Activated CD4-positive, alpha-beta T cell treated with anti-CD3 and anti-CD28 coated beads for 36 hours (primary cell): ENCODE measurements at regions of chr4 and their contacts with region 1.

Region 1: GRCh38 chr4:25320773-25321172 is 8.2 kb downstream of the ZCCHC4 start:
- DNase-seq: no peak
- ATAC-seq: peak; percentile 93
- H3K4me3 Mint-ChIP-seq: peak overlapping the region; percentile 16
- H3K27ac Mint-ChIP-seq: peak overlapping the region; percentile 89
- H3K4me1 Mint-ChIP-seq: peaks cover 37% of the 10 kb centered on the region
- H3K27me3 Mint-ChIP-seq: no peaks in the 10 kb centered on the region

Region 2: GRCh38 chr4:25174674-25175073 is 146.1 kb before region 1 on chr4:
- CTCF ChIA-PET with region 1: interaction called, 3 read pairs
- POLR2A ChIA-PET with region 1: no interaction called
- intact Hi-C with region 1: loop called in 1 of 2 experiments (anchors 5 kb)
- DNase-seq: no peak
- ATAC-seq: no peak
- H3K4me3 Mint-ChIP-seq: no peak overlapping the region
- H3K27ac Mint-ChIP-seq: no peak overlapping the region
- H3K4me1 Mint-ChIP-seq: peaks cover 30% of the 10 kb centered on the region
- H3K27me3 Mint-ChIP-seq: no peaks in the 10 kb centered on the region

Region 3: DNA sequence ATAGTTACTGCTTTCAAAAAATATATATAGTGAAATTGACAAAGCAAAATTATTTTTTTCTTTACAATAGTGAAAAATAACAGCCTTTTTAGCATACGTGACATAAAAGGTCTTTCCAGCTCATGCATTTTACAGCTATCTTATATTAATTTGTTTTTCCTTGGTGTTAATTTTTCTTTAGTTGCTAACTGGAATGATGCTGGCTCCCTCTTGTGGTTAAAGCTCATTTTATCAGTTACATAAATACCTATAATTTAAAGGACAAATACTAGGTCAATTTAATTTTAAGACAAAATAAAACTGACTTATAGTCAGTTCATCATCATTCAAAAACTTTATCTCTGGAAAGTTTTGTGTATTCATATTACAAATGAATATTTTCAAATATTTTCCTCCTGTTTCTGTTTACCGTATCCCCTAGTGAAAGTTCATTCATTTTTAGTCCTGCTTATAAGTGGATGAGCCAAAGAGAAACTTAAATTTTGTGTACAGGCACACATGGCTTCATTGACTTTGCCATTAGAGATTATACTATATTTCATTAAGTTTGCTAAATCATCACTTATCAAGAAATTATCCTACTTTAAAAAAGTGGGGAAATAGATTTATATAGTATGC is 46.3 kb after region 1 on chr4:
- CTCF ChIA-PET with region 1: interaction called, 17 read pairs
- POLR2A ChIA-PET with region 1: no interaction called
- intact Hi-C with region 1: no loop called
- DNase-seq: no peak
- ATAC-seq: no peak
- H3K4me3 Mint-ChIP-seq: no peak overlapping the region
- H3K27ac Mint-ChIP-seq: no peak overlapping the region
- H3K4me1 Mint-ChIP-seq: no peaks in the 10 kb centered on the region
- H3K27me3 Mint-ChIP-seq: no peaks in the 10 kb centered on the region

Region 4: GRCh38 chr4:25376754-25377571 is 56.2 kb after region 1 on chr4 and contains the start of gene ANAPC4:
- CTCF ChIA-PET with region 1: no interaction called
- POLR2A ChIA-PET with region 1: no interaction called
- intact Hi-C with region 1: loop called in 1 of 2 experiments (anchors 2 kb)
- DNase-seq: peak; percentile 99
- ATAC-seq: peak; percentile 98
- H3K4me3 Mint-ChIP-seq: no peak within 1 kb of the TSS
- H3K27ac Mint-ChIP-seq: peak within 1 kb of the TSS; percentile 74
- H3K4me1 Mint-ChIP-seq: peaks cover 8% of the 10 kb centered on the region
- H3K27me3 Mint-ChIP-seq: no peaks in the 10 kb centered on the region
- total RNA-seq, gene ANAPC4: 19.2 to 31.2 TPM